CD4-positive, alpha-beta memory T cell (primary cell): ENCODE measurements at regions of chr7 and their contacts with region 1.

Region 1: GRCh38 chr7:134316539-134317344 is at the start of gene SLC35B4:
- DNase-seq: peak; percentile 90 to 96 (median 93)
- H3K4me3 ChIP-seq: peak within 1 kb of the TSS; percentile 2 to 81
- H3K4me3 Mint-ChIP-seq: peak within 1 kb of the TSS; percentile 95 to 98 (median 96)
- H3K27ac ChIP-seq: peak within 1 kb of the TSS; percentile 59
- H3K27ac Mint-ChIP-seq: peak within 1 kb of the TSS; percentile 83 to 97 (median 92)
- H3K4me1 ChIP-seq: peaks cover 17% of the 10 kb centered on the region
- H3K4me1 Mint-ChIP-seq: peaks cover 12 to 24% (median 17%) of the 10 kb centered on the region in 4 donors
- H3K27me3 ChIP-seq: no peaks in the 10 kb centered on the region
- H3K27me3 Mint-ChIP-seq: peaks cover 2% of the 10 kb centered on the region in 2 donors
- total RNA-seq, gene SLC35B4: 10.5 to 10.7 TPM

Region 2: DNA sequence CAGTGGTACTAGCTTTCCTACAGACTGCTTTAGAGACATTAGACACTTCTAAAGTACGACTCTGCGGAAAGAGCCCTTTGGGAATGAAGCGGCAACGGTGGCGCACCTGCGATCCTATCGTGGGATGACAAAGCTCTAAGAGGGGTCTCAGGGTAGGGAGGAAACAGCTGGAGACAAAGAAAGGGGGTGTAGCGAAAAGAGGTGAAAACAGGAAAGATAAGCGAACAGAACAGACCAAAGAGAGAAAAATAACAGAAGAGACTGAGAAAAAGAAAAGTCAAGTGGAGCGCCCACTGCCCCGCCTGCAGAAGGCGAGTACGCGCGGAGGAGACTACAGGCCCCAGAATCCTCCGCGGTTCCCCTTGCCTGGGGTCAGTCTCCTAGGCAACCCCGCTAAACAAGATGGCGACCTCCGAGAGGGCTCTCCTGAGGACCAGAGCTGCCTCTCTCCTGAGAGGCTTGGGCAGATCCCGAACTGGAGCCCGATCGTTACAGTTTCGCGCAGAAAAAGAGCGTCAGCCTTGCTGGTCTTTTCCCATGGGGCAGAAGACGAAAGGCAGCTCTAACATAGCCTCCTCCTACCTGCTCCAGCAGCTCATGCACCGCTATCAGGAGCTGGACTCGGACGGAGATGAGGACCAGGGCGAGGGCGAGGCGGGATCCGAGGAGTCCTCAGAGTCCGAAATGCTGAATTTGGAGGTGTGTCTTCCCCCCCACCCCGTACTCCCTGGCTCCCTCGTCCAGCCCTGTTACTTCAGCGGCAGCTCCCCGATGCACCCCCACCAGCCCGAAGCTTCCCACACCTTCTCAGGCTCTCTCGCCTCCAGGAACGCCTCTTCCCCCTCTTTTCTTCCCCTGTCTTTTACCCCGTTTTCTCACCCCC is 189.5 kb before region 1 on chr7 and contains the start of gene LRGUK:
- CTCF ChIA-PET with region 1: no interaction called
- POLR2A ChIA-PET with region 1: interaction called, 7 read pairs
- intact Hi-C with region 1: loop called (anchors 1 kb)
- DNase-seq: peak; percentile 74 to 81 (median 78)
- H3K4me3 ChIP-seq: peak within 1 kb of the TSS; percentile 50 to 78
- H3K4me3 Mint-ChIP-seq: peak within 1 kb of the TSS; percentile 83 to 95 (median 89)
- H3K27ac ChIP-seq: no peak within 1 kb of the TSS
- H3K27ac Mint-ChIP-seq: peak within 1 kb of the TSS in 6 of 7 donors; percentile 23 to 69 (median 44)
- H3K4me1 ChIP-seq: peaks cover 15% of the 10 kb centered on the region
- H3K4me1 Mint-ChIP-seq: peaks cover 13 to 21% (median 15%) of the 10 kb centered on the region in 4 donors
- H3K27me3 ChIP-seq: peaks cover 3% of the 10 kb centered on the region
- H3K27me3 Mint-ChIP-seq: peaks cover 12 to 20% of the 10 kb centered on the region in 2 donors
- total RNA-seq, gene LRGUK: 0.38 to 0.55 TPM

Region 3: DNA sequence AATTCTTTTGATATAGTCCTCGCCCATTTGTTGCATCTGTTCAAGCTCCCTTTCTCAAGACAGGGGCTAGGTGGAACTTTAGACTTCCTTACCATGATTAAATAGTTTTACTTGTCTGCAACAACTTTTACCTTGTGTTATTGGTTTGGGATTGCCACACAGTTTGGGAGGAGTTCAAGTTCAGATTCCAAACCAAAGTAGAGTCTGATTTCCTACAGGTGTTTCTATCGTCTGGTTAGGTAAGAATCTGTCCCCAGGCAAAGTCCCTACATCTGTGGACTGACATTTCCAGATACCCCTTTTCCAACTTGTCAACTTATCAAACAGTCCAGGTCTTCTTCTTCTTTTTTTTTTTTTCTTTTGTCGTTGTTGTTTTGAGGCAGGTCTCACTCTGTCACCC is 96.5 kb before region 1 on chr7:
- CTCF ChIA-PET with region 1: no interaction called
- POLR2A ChIA-PET with region 1: no interaction called
- intact Hi-C with region 1: no loop called
- DNase-seq: no peak
- H3K4me3 ChIP-seq: no peak overlapping the region
- H3K4me3 Mint-ChIP-seq: no peak overlapping the region
- H3K27ac ChIP-seq: no peak overlapping the region
- H3K27ac Mint-ChIP-seq: no peak overlapping the region
- H3K4me1 ChIP-seq: no peaks in the 10 kb centered on the region
- H3K4me1 Mint-ChIP-seq: no peaks in the 10 kb centered on the region
- H3K27me3 ChIP-seq: no peaks in the 10 kb centered on the region
- H3K27me3 Mint-ChIP-seq: peaks cover 3 to 7% of the 10 kb centered on the region in 2 donors

Region 4: DNA sequence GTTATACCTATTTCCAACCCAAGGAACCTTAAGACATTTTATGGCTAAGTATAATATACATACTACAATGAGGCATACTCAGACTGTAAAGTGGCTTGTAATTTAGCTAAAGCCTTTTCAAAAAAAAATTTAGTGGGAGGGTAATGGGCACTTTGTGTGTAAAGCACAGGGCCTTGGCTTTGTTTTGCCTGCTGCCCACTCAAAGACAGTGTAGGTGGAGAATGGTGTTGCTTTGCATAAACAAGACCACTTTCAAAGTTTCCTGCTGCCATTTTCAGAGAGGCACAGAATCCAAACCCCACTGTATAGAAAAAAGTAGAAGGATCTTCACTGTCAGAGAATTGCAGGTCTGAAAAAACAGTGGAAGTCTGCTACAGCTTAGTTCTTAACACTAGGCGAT is 21.2 kb after region 1 on chr7:
- CTCF ChIA-PET with region 1: no interaction called
- POLR2A ChIA-PET with region 1: no interaction called
- intact Hi-C with region 1: no loop called
- DNase-seq: no peak
- H3K4me3 ChIP-seq: no peak overlapping the region
- H3K4me3 Mint-ChIP-seq: no peak overlapping the region
- H3K27ac ChIP-seq: no peak overlapping the region
- H3K27ac Mint-ChIP-seq: no peak overlapping the region
- H3K4me1 ChIP-seq: no peaks in the 10 kb centered on the region
- H3K4me1 Mint-ChIP-seq: no peaks in the 10 kb centered on the region
- H3K27me3 ChIP-seq: no peaks in the 10 kb centered on the region
- H3K27me3 Mint-ChIP-seq: peaks cover 5 to 18% of the 10 kb centered on the region in 2 donors

Region 5: GRCh38 chr7:134458806-134459698 is 142.3 kb after region 1 on chr7 and contains the start of gene AKR1B1:
- CTCF ChIA-PET with region 1: interaction called, 10 read pairs
- POLR2A ChIA-PET with region 1: interaction called, 3 read pairs
- intact Hi-C with region 1: loop called (anchors 1 kb)
- DNase-seq: peak; percentile 84 to 89 (median 86)
- H3K4me3 ChIP-seq: peak within 1 kb of the TSS; percentile 25 to 62
- H3K4me3 Mint-ChIP-seq: peak within 1 kb of the TSS; percentile 91 to 94 (median 92)
- H3K27ac ChIP-seq: peak within 1 kb of the TSS; percentile 55
- H3K27ac Mint-ChIP-seq: peak within 1 kb of the TSS; percentile 71 to 95 (median 88)
- H3K4me1 ChIP-seq: peaks cover 36% of the 10 kb centered on the region
- H3K4me1 Mint-ChIP-seq: peaks cover 38 to 57% (median 43%) of the 10 kb centered on the region in 4 donors
- H3K27me3 ChIP-seq: no peaks in the 10 kb centered on the region
- H3K27me3 Mint-ChIP-seq: no peaks in the 10 kb centered on the region
- total RNA-seq, gene AKR1B1: 81.2 to 91.1 TPM

Region 6: DNA sequence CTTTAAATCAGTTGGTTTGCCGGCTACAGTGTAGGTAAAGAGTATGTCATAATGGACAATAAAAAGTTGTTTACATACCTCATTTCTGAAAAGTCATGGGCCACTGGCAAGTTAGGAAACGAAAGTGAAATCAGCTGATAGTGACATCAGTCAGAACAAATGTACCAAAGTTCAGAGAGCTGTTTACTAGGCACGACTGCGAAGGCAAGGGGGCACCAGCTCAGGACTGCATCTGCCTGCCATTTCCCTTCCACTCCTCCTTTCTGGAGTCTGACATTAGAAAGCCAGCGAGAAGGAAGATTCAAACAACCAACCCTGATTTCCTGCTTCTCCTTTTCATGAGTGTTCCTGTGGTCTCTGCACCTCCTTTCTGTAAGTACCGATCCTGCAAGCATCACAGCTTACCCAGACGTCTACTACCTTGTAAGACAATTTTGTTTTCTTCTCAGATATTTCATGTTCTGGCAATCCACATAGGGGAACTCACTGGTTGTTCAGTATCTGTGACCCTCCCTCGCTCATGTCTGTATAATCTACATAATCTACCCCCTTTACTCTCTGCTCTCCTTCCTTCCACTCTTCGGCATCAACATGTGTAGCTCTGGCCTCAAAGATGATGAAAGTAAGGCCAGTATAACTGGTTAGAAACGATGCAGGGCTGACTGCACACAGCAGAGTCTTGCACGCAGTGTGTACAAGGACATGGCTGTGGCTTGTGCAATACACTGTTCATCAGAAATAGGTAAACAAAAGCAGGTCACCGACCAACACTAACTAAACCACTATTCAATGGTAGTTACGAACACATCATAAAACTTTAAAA is 831.4 kb after region 1 on chr7 and contains the start of gene TMEM140:
- CTCF ChIA-PET with region 1: no interaction called
- POLR2A ChIA-PET with region 1: interaction called, 3 read pairs
- intact Hi-C with region 1: loop called (anchors 5 kb)
- DNase-seq: peak; percentile 74 to 85 (median 80)
- H3K4me3 ChIP-seq: peak within 1 kb of the TSS; percentile 48 to 67
- H3K4me3 Mint-ChIP-seq: peak within 1 kb of the TSS; percentile 85 to 96 (median 92)
- H3K27ac ChIP-seq: peak within 1 kb of the TSS; percentile 90
- H3K27ac Mint-ChIP-seq: peak within 1 kb of the TSS; percentile 90 to 99 (median 98)
- H3K4me1 ChIP-seq: peaks cover 61% of the 10 kb centered on the region
- H3K4me1 Mint-ChIP-seq: peaks cover 44 to 78% (median 59%) of the 10 kb centered on the region in 4 donors
- H3K27me3 ChIP-seq: no peaks in the 10 kb centered on the region
- H3K27me3 Mint-ChIP-seq: no peaks in the 10 kb centered on the region
- total RNA-seq, gene TMEM140: 28.3 to 31.3 TPM

Region 7: DNA sequence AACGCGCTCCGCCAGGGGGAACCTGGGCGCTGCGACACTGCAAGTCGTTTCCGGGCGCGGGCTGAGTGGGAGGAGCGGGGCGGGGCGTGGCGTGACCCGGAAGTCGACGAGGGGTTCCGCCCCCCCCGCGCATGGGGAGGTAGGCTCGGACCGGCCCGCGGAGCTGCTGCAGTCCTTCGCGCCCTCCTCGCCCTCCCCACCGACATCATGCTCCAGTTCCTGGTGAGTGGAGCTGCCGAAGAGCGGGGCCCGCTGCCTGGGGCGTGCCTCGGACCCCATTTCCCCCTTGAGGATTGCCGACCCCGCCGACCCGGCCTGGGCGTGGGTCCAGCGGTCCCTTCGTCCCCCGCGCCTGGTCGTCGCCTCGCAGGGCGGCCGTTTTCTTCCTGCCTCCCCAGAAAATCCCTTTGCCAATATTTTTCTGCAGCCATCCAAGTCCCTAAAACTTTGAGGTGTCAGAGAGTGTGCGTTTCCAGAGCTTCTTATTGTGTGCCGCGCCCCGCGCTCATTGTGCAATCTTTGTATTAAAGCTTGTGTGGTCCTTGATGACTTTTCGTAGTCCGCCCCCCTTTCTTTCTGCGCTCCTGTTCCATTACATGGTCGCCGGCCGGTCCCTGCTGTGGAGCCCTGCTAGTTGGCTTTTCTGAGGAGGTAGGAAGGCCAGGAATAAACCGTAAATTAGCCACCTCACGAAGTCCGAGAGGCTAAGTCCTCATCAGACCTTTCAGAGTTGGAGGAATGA is 1345.8 kb after region 1 on chr7 and contains the start of gene STMP1:
- CTCF ChIA-PET with region 1: no interaction called
- POLR2A ChIA-PET with region 1: no interaction called
- intact Hi-C with region 1: loop called (anchors 2 kb)
- DNase-seq: peak; percentile 92 to 94 (median 93)
- H3K4me3 ChIP-seq: peak within 1 kb of the TSS; percentile 86 to 98
- H3K4me3 Mint-ChIP-seq: peak within 1 kb of the TSS; percentile 91 to 98 (median 96)
- H3K27ac ChIP-seq: peak within 1 kb of the TSS; percentile 76
- H3K27ac Mint-ChIP-seq: peak within 1 kb of the TSS; percentile 83 to 98 (median 95)
- H3K4me1 ChIP-seq: peaks cover 30% of the 10 kb centered on the region
- H3K4me1 Mint-ChIP-seq: peaks cover 25 to 52% (median 38%) of the 10 kb centered on the region in 4 donors
- H3K27me3 ChIP-seq: no peaks in the 10 kb centered on the region
- H3K27me3 Mint-ChIP-seq: no peaks in the 10 kb centered on the region
- total RNA-seq, gene STMP1: 29.5 to 29.7 TPM